ENCODE measurements at regions of chr9 and their contacts with region 1.

Region 1: DNA sequence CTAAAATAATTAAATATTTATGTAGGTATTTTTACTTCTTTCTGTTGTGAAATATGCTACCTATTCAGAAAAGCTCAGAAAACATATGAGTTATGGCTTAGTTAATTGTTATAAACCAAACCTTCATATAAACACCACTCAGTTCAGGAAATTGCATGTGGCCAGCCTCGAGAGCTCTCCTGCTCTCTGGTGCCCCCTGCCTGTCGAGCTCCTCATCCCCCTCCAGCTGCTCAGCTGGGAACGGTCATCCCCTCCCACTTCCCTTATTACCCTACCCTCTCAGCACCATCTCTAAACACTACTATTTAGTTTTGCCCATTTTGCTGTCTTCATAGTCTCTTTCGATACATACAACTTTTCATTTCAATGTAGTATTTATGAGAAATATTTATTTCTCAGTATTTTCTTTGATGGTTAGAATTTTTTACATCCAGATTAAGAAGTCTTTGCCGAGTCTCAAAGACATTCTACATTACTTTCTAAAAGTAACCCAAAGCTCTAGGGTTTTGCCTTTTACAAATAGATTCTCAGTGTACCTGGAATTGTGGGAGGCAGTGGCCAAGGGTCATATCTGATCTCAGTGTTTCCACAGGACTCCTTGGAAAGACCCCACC is 51.2 kb upstream of the SEMA4D start:
- DNase-seq: peak; percentile 94
- ATAC-seq: peak; percentile 100
- H3K4me3 Mint-ChIP-seq: no peak overlapping the region
- H3K27ac Mint-ChIP-seq: no peak overlapping the region
- H3K4me1 Mint-ChIP-seq: peaks cover 22% of the 10 kb centered on the region
- H3K27me3 Mint-ChIP-seq: no peaks in the 10 kb centered on the region

Region 2: GRCh38 chr9:89410641-89411350 is 138.3 kb before region 1 on chr9:
- CTCF ChIA-PET with region 1: interaction called, 32 read pairs
- POLR2A ChIA-PET with region 1: interaction called, 5 read pairs
- intact Hi-C with region 1: loop called (anchors 1 kb)
- DNase-seq: peak; percentile 85
- ATAC-seq: peak; percentile 81
- H3K4me3 Mint-ChIP-seq: peak overlapping the region; percentile 50
- H3K27ac Mint-ChIP-seq: peak overlapping the region; percentile 92
- H3K4me1 Mint-ChIP-seq: peaks cover 90% of the 10 kb centered on the region
- H3K27me3 Mint-ChIP-seq: no peaks in the 10 kb centered on the region

Region 3: DNA sequence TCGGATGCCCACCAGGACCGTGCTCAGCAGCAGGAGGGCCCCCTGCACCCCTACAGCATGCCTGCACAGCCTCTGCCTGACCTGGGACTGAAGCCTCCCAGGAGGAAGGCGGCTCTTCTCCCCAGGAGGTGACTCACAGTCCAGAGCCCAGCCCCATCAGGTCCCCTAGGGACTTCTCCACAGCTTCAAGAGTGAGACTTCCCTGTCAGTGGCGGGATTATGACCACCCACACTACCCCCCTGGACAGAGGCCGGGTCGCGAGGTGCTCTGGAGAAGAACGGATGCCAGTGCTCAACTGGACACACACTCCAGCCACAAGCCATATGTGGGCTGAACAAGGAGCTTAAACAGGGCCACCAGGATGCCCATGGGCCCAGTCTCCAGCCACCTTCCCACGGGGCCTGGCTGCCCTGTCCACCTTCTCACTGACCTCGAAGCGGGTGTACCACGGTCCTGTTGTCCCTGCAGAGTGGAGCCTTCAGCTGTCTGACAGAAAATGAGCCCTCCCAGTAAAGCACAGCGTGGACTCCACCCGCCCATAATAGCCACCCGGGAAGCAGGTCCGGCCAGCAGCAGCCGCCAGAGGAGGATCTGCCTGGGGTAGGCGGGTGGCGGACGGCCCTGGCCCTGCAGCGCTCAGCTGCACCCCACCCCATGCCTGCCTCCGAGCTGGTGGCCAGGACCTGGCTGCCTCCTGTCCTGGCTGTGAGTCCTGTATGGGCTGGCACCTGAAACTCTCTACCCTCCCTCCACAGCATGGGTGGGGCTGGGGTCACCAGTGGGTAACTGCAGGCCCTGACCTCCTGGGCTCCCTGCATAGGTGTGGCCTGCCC is 105.9 kb before region 1 on chr9:
- CTCF ChIA-PET with region 1: interaction called, 14 read pairs
- POLR2A ChIA-PET with region 1: interaction called, 3 read pairs
- intact Hi-C with region 1: no loop called
- DNase-seq: no peak
- ATAC-seq: peak; percentile 7
- H3K4me3 Mint-ChIP-seq: no peak overlapping the region
- H3K27ac Mint-ChIP-seq: peak overlapping the region; percentile 94
- H3K4me1 Mint-ChIP-seq: peaks cover 93% of the 10 kb centered on the region
- H3K27me3 Mint-ChIP-seq: no peaks in the 10 kb centered on the region

Region 4: GRCh38 chr9:89477811-89478630 is 71.1 kb before region 1 on chr9:
- CTCF ChIA-PET with region 1: interaction called, 29 read pairs
- POLR2A ChIA-PET with region 1: interaction called, 16 read pairs
- intact Hi-C with region 1: loop called in 1 of 2 experiments (anchors 2 kb)
- DNase-seq: peak; percentile 79
- ATAC-seq: peak; percentile 43
- H3K4me3 Mint-ChIP-seq: peak overlapping the region; percentile 92
- H3K27ac Mint-ChIP-seq: peak overlapping the region; percentile 99
- H3K4me1 Mint-ChIP-seq: peaks cover 94% of the 10 kb centered on the region
- H3K27me3 Mint-ChIP-seq: no peaks in the 10 kb centered on the region

Region 5: DNA sequence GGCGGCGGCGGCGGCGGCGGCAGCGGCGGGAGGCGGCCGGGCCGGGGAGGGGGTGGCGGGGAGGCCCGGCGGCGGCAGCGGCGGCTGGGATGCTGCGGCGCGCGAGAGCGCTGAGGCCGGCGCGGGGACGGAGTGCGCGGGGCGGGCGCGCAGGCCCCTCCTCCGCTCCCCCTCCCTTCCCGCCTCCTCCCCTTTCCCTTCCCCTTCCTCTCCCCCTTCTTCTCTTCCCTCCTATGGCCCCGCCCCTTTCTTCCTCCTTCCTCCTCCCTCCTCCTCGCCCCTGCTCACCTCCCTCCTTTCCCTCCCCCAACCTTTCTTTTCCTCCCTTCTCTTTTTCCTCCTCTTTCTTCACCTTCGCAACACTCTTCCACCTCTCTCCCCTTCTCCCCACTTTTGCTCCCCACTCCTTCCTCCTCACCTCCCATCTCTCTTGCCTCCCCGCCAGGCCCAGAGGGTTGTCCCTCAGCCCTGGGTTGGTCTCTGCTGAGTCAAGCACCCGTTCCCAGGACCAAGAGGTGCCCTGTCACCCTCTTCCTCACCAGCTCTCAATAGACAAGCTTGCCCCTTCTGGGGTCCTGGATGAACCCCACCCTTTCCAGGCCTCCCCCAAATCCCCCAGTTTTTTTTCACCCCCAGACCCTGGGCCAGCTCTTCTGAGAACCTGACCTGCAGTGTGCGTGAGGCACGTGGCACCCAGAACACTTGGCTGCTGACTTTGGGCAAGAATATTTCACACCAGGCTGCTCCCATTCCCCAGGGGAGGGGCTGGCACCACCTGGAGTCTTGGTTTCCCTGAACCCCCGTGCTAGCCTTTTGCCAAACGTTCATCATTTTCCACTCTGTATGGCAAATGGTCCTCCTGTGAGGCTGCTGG is 50.9 kb before region 1 on chr9 and contains the start of gene SEMA4D:
- CTCF ChIA-PET with region 1: interaction called, 25 read pairs
- POLR2A ChIA-PET with region 1: no interaction called
- intact Hi-C with region 1: loop called in 1 of 2 experiments (anchors 1 kb)
- DNase-seq: peak; percentile 85
- ATAC-seq: peak; percentile 38
- H3K4me3 Mint-ChIP-seq: peak within 1 kb of the TSS; percentile 89
- H3K27ac Mint-ChIP-seq: peak within 1 kb of the TSS; percentile 91
- H3K4me1 Mint-ChIP-seq: peaks cover 75% of the 10 kb centered on the region
- H3K27me3 Mint-ChIP-seq: no peaks in the 10 kb centered on the region
- total RNA-seq, gene SEMA4D: 215 to 226 TPM

Region 6: DNA sequence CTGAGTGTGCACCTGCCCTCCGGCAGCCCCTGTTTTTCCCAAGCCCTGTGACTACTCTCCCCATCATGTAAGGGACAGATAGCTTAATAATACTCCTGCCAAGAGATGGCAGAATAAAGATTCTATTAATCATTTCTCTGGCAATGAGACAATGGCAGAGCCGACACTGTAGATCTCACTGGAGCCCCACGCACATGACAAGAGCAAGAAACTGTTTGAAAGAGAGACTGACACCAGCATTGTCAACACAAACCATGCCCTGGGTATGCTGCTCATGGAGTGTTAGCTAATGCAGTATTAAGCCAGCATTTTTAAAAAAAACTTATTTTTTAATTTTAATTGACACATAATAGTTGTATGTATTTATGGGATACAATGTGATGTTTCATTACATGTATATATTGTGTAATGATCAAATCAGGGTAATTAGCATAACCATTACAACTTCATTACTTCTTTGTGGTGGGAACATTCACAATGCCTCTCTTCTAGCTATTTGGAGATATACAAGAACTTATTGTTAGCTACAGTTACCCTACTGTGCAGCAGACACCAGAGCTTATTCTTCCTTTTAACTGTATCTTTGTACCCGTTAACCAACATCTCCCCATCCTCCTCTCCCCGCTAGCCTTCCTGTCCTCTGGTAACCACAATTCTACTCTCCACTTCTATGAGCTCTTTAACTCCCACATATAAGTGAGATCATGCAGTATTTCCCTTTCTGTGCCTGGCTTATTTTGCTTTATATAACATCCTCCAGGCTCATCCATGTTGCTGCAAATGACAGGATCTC is 19.7 kb before region 1 on chr9:
- CTCF ChIA-PET with region 1: interaction called, 47 read pairs
- POLR2A ChIA-PET with region 1: no interaction called
- intact Hi-C with region 1: no loop called
- DNase-seq: no peak
- ATAC-seq: peak; percentile 31
- H3K4me3 Mint-ChIP-seq: peak overlapping the region; percentile 37
- H3K27ac Mint-ChIP-seq: peak overlapping the region; percentile 68
- H3K4me1 Mint-ChIP-seq: peaks cover 95% of the 10 kb centered on the region
- H3K27me3 Mint-ChIP-seq: no peaks in the 10 kb centered on the region

Region 7: GRCh38 chr9:89690334-89690912 is 141.3 kb after region 1 on chr9:
- CTCF ChIA-PET with region 1: no interaction called
- POLR2A ChIA-PET with region 1: no interaction called
- intact Hi-C with region 1: no loop called
- DNase-seq: no peak
- ATAC-seq: peak; percentile 64
- H3K4me3 Mint-ChIP-seq: no peak overlapping the region
- H3K27ac Mint-ChIP-seq: no peak overlapping the region
- H3K4me1 Mint-ChIP-seq: peaks cover 12% of the 10 kb centered on the region
- H3K27me3 Mint-ChIP-seq: no peaks in the 10 kb centered on the region

Measured in activated CD4-positive, alpha-beta T cell treated with anti-CD3 and anti-CD28 coated beads for 36 hours (primary cell).